Mammary epithelial cell (primary cell): ENCODE measurements at regions of chr4 and their contacts with region 1.

Region 1: GRCh38 chr4:185640811-185641675 is 105.7 kb upstream of the PDLIM3 start:
- DNase-seq: peak; percentile 50
- H3K4me3 ChIP-seq: no peak overlapping the region
- H3K27ac ChIP-seq: no peak overlapping the region
- H3K4me1 ChIP-seq: no peaks in the 10 kb centered on the region
- H3K27me3 ChIP-seq: no peaks in the 10 kb centered on the region
- CTCF ChIP-seq: peak; percentile 18 to 51

Region 2: GRCh38 chr4:185811509-185812364 is 170.7 kb after region 1 on chr4 and contains the start of gene SORBS2:
- CTCF ChIA-PET with region 1: no interaction called
- dilution Hi-C with region 1: no loop called
- in situ Hi-C with region 1: no loop called
- intact Hi-C with region 1: loop called (anchors 1 kb)
- DNase-seq: peak; percentile 70
- H3K4me3 ChIP-seq: peak within 1 kb of the TSS; percentile 36 to 52 (median 47)
- H3K27ac ChIP-seq: peak within 1 kb of the TSS; percentile 33
- H3K4me1 ChIP-seq: peaks cover 9% of the 10 kb centered on the region
- H3K27me3 ChIP-seq: no peaks in the 10 kb centered on the region
- CTCF ChIP-seq: no peak
- total RNA-seq, gene SORBS2: 5.6 to 8.5 TPM

Region 3: DNA sequence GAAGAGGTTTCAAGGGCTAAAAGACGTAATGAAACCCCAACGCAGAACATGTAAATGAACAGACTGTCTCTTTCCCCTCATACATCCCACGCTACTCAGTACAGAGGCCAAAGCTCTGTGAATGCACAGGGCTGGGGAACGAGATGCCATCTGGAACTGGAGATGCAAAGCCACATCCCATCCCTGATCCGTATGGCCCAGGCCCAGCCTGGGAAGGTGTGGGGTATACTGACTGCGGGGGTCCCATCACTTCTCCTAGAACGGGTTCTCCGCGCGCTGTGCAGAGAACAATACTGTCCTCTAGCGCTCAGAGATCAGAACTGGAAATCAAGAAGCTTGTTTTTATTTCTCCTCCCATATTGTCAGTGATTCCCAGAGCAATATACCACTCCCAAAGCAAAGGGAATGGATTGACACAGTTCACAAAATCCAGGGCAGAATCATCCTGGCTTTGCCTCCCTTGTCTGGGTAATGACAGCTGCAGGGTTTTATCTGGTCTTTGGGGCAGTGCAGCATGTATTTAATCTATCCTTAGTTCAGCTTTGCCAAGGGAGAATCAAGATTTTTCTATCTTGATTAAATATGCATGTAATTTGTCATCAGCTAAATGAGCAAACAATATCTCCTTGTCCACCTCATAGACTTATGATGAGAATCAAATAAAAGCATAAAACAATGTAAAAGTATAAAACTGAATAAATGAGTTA is 380.6 kb after region 1 on chr4:
- CTCF ChIA-PET with region 1: interaction called, 4 read pairs
- dilution Hi-C with region 1: loop called (anchors 10 kb)
- in situ Hi-C with region 1: loop called (anchors 10 kb)
- intact Hi-C with region 1: loop called (anchors 1 kb)
- DNase-seq: peak; percentile 11
- H3K4me3 ChIP-seq: no peak overlapping the region
- H3K27ac ChIP-seq: no peak overlapping the region
- H3K4me1 ChIP-seq: no peaks in the 10 kb centered on the region
- H3K27me3 ChIP-seq: no peaks in the 10 kb centered on the region
- CTCF ChIP-seq: peak; percentile 80 to 96

Region 4: GRCh38 chr4:186137196-186137794 is 496.3 kb after region 1 on chr4:
- CTCF ChIA-PET with region 1: no interaction called
- dilution Hi-C with region 1: no loop called
- in situ Hi-C with region 1: no loop called
- intact Hi-C with region 1: loop called (anchors 10 kb)
- DNase-seq: no peak
- H3K4me3 ChIP-seq: no peak overlapping the region
- H3K27ac ChIP-seq: no peak overlapping the region
- H3K4me1 ChIP-seq: no peaks in the 10 kb centered on the region
- H3K27me3 ChIP-seq: no peaks in the 10 kb centered on the region
- CTCF ChIP-seq: peak; percentile 55 to 64